Transverse colon (tissue), 4 donors: ENCODE measurements at regions of chr16 and their contacts with region 1.

Region 1: DNA sequence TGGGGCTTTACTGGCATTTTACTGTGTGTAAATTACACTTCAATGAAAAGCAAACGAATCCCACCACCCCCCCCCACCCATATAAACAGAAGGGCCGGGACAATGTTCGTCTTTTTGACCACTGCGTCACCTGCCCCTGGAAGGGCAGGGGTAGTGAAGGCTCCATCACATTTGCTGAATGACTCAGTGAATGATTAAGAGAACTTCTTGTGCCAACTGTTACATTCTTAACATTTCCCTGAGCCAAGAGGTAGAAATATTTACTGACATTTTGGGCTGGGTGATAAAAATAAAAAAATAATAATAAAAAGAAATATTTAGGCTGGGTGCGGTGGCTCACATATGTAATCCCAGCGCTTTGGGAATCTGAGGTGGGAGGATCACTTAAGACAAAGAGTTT is 24.1 kb downstream of the C16orf96 start:
- DNase-seq: no peak
- H3K4me3 ChIP-seq: no peak overlapping the region
- H3K27ac ChIP-seq: no peak overlapping the region
- H3K4me1 ChIP-seq: no peaks in the 10 kb centered on the region
- H3K27me3 ChIP-seq: no peaks in the 10 kb centered on the region
- CTCF ChIP-seq: no peak
- EP300 ChIP-seq: no peak
- POLR2A ChIP-seq: no peak

Region 2: GRCh38 chr16:4475880-4476788 is 104.1 kb before region 1 on chr16 and contains the start of gene HMOX2:
- in situ Hi-C with region 1: no loop called
- intact Hi-C with region 1: no loop called
- DNase-seq: peak; percentile 96
- H3K4me3 ChIP-seq: peak within 1 kb of the TSS; percentile 77 to 96 (median 89)
- H3K27ac ChIP-seq: peak within 1 kb of the TSS; percentile 90 to 94 (median 92)
- H3K4me1 ChIP-seq: peaks cover 0 to 31% (median 20%) of the 10 kb centered on the region in 4 donors
- H3K27me3 ChIP-seq: no peaks in the 10 kb centered on the region
- CTCF ChIP-seq: peak in 4 of 5 experiments; percentile 25 to 47 (median 41)
- EP300 ChIP-seq: no peak
- POLR2A ChIP-seq: peak; percentile 94
- total RNA-seq, gene HMOX2: 46.4 to 495 (median 55.7) TPM

Region 3: DNA sequence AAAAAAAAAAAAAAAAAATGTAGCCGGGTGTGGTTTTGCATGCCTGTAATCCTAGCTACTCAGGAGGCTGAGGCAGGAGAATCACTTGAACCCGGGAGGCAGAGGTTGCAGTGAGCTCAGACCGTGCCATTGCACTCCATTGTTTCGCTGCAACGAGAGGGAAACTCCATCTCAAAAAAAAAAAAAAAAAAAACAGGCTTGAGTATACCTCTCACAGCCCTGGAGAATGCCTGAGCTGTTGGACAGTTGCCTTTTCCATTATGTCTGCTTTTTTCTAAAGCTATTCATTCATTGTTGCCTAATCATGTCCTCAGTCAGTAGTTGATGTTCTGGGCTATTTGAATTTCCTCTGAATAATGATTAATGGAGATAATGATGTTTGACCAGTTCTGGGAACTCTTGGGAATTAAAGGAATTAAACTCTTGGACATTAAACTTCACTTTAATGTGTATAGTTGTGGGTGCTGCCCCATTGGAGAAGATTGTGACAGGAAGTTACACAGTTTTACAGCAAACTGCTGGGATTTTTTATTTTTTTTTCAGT is 92.2 kb before region 1 on chr16:
- in situ Hi-C with region 1: no loop called
- intact Hi-C with region 1: no loop called
- DNase-seq: no peak
- H3K4me3 ChIP-seq: no peak overlapping the region
- H3K27ac ChIP-seq: peak overlapping the region in 3 of 4 donors; percentile 3 to 49 (median 22)
- H3K4me1 ChIP-seq: peaks cover 0 to 9% (median 0%) of the 10 kb centered on the region in 4 donors
- H3K27me3 ChIP-seq: no peaks in the 10 kb centered on the region
- CTCF ChIP-seq: no peak
- EP300 ChIP-seq: no peak
- POLR2A ChIP-seq: no peak

Region 4: DNA sequence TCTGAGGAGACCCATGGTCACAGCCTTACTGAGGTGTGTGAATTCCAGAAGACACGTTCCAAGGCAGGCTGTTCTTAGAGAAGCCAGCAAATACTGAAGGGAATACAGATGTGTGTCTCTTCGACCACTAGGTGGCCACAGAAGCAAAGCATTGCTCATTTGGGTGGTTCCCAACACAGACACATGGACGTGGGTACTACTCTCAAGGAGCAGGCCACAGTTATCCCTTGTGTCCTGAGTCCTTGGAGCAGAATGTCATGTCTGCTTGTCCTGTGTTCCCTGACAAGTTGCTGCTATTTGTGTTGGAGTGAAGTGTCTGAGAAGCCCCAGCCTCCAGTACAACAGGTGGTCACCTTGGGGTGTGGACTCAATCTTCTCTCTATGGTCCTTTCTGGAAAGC is 73.8 kb before region 1 on chr16:
- in situ Hi-C with region 1: no loop called
- intact Hi-C with region 1: loop called (anchors 10 kb)
- DNase-seq: peak; percentile 63
- H3K4me3 ChIP-seq: no peak overlapping the region
- H3K27ac ChIP-seq: peak overlapping the region; percentile 12 to 49 (median 31)
- H3K4me1 ChIP-seq: peaks cover 9 to 28% (median 9%) of the 10 kb centered on the region in 4 donors
- H3K27me3 ChIP-seq: no peaks in the 10 kb centered on the region
- CTCF ChIP-seq: peak; percentile 73 to 86 (median 81)
- EP300 ChIP-seq: no peak
- POLR2A ChIP-seq: no peak